Ovary (tissue), 10 donors: ENCODE measurements at regions of chr14 and their contacts with region 1.

Region 1: GRCh38 chr14:74860906-74861733 is 14.8 kb downstream of the PROX2 start:
- DNase-seq: peak; percentile 77 to 92 (median 88)
- H3K4me3 ChIP-seq: no peak overlapping the region
- H3K27ac ChIP-seq: no peak overlapping the region
- H3K4me1 ChIP-seq: no peaks in the 10 kb centered on the region
- H3K27me3 ChIP-seq: no peaks in the 10 kb centered on the region
- CTCF ChIP-seq: peak; percentile 63 to 75 (median 72)
- EP300 ChIP-seq: no peak
- POLR2A ChIP-seq: no peak

Region 2: GRCh38 chr14:74641601-74642391 is 219.3 kb before region 1 on chr14:
- intact Hi-C with region 1: no loop called
- DNase-seq: no peak
- H3K4me3 ChIP-seq: no peak overlapping the region
- H3K27ac ChIP-seq: peak overlapping the region in 1 of 2 donors; percentile 34
- H3K4me1 ChIP-seq: peaks cover 9% of the 10 kb centered on the region
- H3K27me3 ChIP-seq: no peaks in the 10 kb centered on the region
- CTCF ChIP-seq: no peak
- EP300 ChIP-seq: no peak
- POLR2A ChIP-seq: no peak

Region 3: DNA sequence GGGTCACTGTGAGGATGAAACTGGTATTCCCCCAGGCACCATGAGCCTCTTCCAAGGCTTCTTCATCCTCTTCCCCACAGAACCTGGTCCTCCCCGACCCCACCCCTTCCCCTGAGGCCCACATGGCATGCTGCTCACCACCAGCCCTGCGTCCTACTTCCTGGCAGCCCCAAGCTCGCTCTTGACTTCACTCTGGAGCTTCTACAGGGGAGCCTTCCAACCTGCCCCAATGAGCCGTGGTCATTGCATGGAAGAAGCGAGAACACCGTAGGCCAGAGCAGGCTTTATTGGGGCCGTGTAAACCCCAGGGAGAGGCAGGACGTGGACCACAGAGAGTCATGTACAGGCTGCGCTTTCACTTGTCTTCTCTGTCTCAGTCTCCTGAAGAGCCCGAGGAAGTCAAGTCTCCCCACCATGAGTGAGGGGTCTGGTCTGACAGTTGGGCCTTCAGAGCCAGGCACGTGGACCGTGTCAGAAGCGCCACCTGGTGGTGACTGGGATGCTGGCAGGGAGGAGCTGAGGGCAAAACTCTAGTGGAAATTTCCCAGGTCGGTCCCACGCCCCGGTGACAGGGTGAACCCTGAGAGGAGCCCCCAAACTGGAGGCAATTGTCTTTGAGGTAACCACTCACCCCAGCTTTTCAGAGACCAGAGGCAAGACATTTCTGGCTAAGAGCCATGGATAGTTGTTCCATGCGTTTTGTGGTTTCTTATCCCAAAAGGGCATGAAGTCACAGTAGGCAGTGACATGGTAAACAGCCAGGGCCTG is 44.4 kb after region 1 on chr14:
- intact Hi-C with region 1: loop called in 2 of 4 experiments (anchors 5 kb)
- DNase-seq: peak; percentile 70 to 84 (median 81)
- H3K4me3 ChIP-seq: no peak overlapping the region
- H3K27ac ChIP-seq: no peak overlapping the region
- H3K4me1 ChIP-seq: no peaks in the 10 kb centered on the region
- H3K27me3 ChIP-seq: no peaks in the 10 kb centered on the region
- CTCF ChIP-seq: peak; percentile 70 to 87 (median 77)
- EP300 ChIP-seq: no peak
- POLR2A ChIP-seq: no peak

Region 4: DNA sequence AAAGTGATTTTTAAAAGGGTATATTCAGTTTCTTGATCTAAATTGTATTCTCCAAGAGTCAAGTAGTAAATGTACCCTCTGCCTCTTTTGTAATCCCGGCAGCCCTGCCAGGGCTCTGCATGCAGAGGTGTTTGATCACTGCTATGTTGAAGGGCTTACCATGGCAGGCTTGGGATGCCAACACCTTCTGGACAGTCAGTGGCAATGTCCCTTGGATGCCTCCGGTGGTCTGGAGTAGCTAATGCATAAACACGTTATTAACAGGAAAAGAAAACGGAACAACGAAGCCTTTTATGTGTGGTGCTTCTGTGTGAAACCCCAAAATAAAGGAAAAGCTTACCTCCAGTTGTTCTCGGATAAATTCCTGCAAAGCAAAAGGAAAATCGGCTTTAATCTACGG is 161.5 kb after region 1 on chr14:
- intact Hi-C with region 1: no loop called
- DNase-seq: no peak
- H3K4me3 ChIP-seq: no peak overlapping the region
- H3K27ac ChIP-seq: no peak overlapping the region
- H3K4me1 ChIP-seq: no peaks in the 10 kb centered on the region
- H3K27me3 ChIP-seq: no peaks in the 10 kb centered on the region
- CTCF ChIP-seq: no peak
- EP300 ChIP-seq: no peak
- POLR2A ChIP-seq: no peak